Mammary epithelial cell (primary cell): ENCODE measurements at regions of chr15 and their contacts with region 1.

Region 1: GRCh38 chr15:83904107-83905040 is 250.5 kb downstream of the ADAMTSL3 start:
- DNase-seq: no peak
- H3K4me3 ChIP-seq: no peak overlapping the region
- H3K27ac ChIP-seq: no peak overlapping the region
- H3K4me1 ChIP-seq: no peaks in the 10 kb centered on the region
- H3K27me3 ChIP-seq: peaks cover 1% of the 10 kb centered on the region
- CTCF ChIP-seq: no peak

Region 2: GRCh38 chr15:83830381-83830780 is 74.0 kb before region 1 on chr15:
- CTCF ChIA-PET with region 1: no interaction called
- dilution Hi-C with region 1: loop called (anchors 5 kb)
- in situ Hi-C with region 1: no loop called
- intact Hi-C with region 1: no loop called
- DNase-seq: no peak
- H3K4me3 ChIP-seq: no peak overlapping the region
- H3K27ac ChIP-seq: no peak overlapping the region
- H3K4me1 ChIP-seq: no peaks in the 10 kb centered on the region
- H3K27me3 ChIP-seq: no peaks in the 10 kb centered on the region
- CTCF ChIP-seq: no peak

Region 3: GRCh38 chr15:83955806-83956265 is 51.5 kb after region 1 on chr15:
- CTCF ChIA-PET with region 1: no interaction called
- dilution Hi-C with region 1: loop called (anchors 5 kb)
- in situ Hi-C with region 1: no loop called
- intact Hi-C with region 1: no loop called
- DNase-seq: no peak
- H3K4me3 ChIP-seq: no peak overlapping the region
- H3K27ac ChIP-seq: no peak overlapping the region
- H3K4me1 ChIP-seq: peaks cover 7% of the 10 kb centered on the region
- H3K27me3 ChIP-seq: no peaks in the 10 kb centered on the region
- CTCF ChIP-seq: no peak